Naive thymus-derived CD4-positive, alpha-beta T cell (primary cell): ENCODE measurements at regions of chr7 and their contacts with region 1.

Region 1: DNA sequence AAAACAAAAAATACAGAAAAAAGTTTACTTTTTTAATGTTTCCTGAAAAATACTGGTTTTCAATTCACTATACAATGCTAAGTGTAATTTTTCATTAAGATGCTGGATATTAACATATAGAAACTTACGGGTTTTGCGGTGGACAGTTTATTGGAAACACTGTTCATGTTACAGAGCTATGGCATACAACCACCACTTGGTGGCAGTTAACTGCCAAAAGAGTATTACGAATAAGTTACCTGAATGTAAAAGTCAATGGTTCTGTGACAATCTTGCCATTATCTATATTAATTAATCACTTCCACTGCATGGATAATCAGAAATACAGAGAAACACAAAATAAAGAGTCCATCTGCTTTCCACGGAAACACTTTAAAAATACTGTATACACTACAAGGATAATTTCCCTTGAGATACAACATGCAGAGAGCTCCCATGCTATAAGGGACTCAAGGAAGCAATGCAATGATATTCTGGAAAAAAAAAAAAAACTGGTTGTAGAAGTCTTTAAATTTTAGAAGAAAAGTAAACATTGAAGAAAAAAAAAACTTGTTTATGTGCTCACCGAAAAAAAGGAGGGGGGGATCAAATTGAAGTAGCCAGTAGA is 97.0 kb downstream of the TPK1 start:
- DNase-seq: peak in 7 of 9 donors; percentile 9 to 55 (median 43)
- ATAC-seq: peak; percentile 67
- H3K4me3 ChIP-seq: no peak overlapping the region
- H3K4me3 Mint-ChIP-seq: no peak overlapping the region
- H3K27ac ChIP-seq: no peak overlapping the region
- H3K27ac Mint-ChIP-seq: no peak overlapping the region
- H3K4me1 ChIP-seq: no peaks in the 10 kb centered on the region
- H3K4me1 Mint-ChIP-seq: peaks cover 0 to 15% (median 11%) of the 10 kb centered on the region in 7 donors
- H3K27me3 ChIP-seq: no peaks in the 10 kb centered on the region
- H3K27me3 Mint-ChIP-seq: no peaks in the 10 kb centered on the region

Region 2: GRCh38 chr7:144854839-144855424 is 116.1 kb after region 1 on chr7:
- CTCF ChIA-PET with region 1: interaction called, 7 read pairs
- POLR2A ChIA-PET with region 1: no interaction called
- intact Hi-C with region 1: loop called (anchors 1 to 2 kb)
- DNase-seq: no peak
- ATAC-seq: no peak
- H3K4me3 ChIP-seq: no peak overlapping the region
- H3K4me3 Mint-ChIP-seq: no peak overlapping the region
- H3K27ac ChIP-seq: no peak overlapping the region
- H3K27ac Mint-ChIP-seq: no peak overlapping the region
- H3K4me1 ChIP-seq: no peaks in the 10 kb centered on the region
- H3K4me1 Mint-ChIP-seq: no peaks in the 10 kb centered on the region
- H3K27me3 ChIP-seq: no peaks in the 10 kb centered on the region
- H3K27me3 Mint-ChIP-seq: peaks cover 0 to 4% (median 0%) of the 10 kb centered on the region in 5 donors

Region 3: DNA sequence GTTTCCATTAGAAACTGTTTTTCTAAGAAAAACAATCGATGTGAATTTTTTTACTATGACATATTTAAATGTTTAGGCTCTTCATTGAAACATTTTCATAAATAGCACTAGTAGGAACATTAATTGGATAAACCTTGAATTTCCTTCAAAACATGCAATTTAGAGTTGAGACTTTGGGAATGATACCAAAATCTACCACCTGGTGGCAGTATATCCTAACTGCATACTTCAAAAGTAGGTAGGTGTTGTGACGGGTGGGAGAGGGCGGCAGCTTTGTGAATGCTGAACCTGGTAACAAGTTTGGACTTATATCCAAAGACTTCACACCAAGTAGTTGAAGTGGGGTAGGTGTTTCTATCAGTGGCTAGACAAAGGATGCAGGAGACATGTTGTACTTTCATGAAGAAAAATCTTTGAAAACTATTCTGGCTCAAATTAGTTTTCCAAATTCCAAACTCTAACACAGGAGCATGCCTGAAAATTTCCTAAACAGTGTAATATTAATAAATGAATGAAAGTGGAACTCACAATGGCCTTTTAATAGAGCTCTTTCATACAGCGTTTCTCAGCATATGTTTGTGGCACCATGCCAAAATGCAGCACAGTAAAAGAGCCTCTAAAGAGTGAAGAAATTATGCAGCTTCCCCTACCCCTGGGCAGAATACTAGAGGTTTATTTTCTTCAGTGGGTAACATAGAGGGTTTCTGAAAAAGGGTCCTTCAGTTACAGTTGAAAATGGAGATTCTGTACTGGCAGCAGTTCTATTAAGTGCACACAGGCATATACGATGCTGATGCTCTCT is 298.0 kb after region 1 on chr7:
- CTCF ChIA-PET with region 1: interaction called, 3 read pairs
- POLR2A ChIA-PET with region 1: no interaction called
- intact Hi-C with region 1: loop called in 1 of 2 experiments (anchors 1 kb)
- DNase-seq: peak in 7 of 9 donors; percentile 9 to 45 (median 37)
- ATAC-seq: peak; percentile 76
- H3K4me3 ChIP-seq: no peak overlapping the region
- H3K4me3 Mint-ChIP-seq: peak overlapping the region in 5 of 10 donors; percentile 22 to 57 (median 35)
- H3K27ac ChIP-seq: no peak overlapping the region
- H3K27ac Mint-ChIP-seq: no peak overlapping the region
- H3K4me1 ChIP-seq: no peaks in the 10 kb centered on the region
- H3K4me1 Mint-ChIP-seq: peaks cover 0 to 5% (median 4%) of the 10 kb centered on the region in 7 donors
- H3K27me3 ChIP-seq: no peaks in the 10 kb centered on the region
- H3K27me3 Mint-ChIP-seq: peaks cover 0 to 20% (median 6%) of the 10 kb centered on the region in 5 donors

Region 4: DNA sequence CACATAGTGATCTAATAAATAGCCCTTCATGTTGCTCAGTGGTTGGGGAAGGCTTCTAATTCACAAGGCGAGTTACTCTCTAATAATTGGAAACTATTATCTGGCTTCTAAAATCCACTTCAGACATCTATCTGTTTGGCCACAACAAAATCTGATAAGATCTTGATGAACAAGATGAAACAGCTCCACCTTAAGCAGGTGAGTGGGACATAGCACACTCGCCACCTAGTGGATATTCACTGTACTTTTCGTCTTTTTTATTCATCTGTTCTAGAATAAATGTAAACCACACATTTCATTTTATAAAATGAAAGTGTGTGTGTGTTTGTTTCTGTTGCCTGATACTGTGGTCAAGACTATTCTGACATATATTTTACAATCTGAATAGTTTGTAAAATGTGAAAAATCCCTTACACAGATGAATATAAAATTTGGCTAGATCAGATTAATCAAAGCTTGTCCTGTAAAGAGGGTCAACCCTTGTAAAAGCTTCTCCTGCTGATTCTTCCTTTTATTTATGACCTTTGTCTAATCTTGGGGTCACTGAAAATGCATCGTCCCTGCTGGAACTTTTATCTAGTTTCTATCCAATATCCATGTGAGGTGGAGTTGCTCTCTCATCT is 1351.3 kb after region 1 on chr7:
- CTCF ChIA-PET with region 1: no interaction called
- POLR2A ChIA-PET with region 1: no interaction called
- intact Hi-C with region 1: loop called in 1 of 2 experiments (anchors 1 kb)
- DNase-seq: peak in 4 of 9 donors; percentile 3 to 33 (median 16)
- ATAC-seq: peak; percentile 48
- H3K4me3 ChIP-seq: no peak overlapping the region
- H3K4me3 Mint-ChIP-seq: no peak overlapping the region
- H3K27ac ChIP-seq: no peak overlapping the region
- H3K27ac Mint-ChIP-seq: no peak overlapping the region
- H3K4me1 ChIP-seq: no peaks in the 10 kb centered on the region
- H3K4me1 Mint-ChIP-seq: no peaks in the 10 kb centered on the region
- H3K27me3 ChIP-seq: no peaks in the 10 kb centered on the region
- H3K27me3 Mint-ChIP-seq: peaks cover 0 to 5% (median 0%) of the 10 kb centered on the region in 5 donors